ENCODE measurements at regions of chr1 and their contacts with region 1.

Region 1: GRCh38 chr1:40519517-40519916 is 10.9 kb downstream of the EXO5 start:
- DNase-seq: no peak
- H3K4me3 Mint-ChIP-seq: no peak overlapping the region
- H3K27ac Mint-ChIP-seq: no peak overlapping the region
- H3K4me1 Mint-ChIP-seq: no peaks in the 10 kb centered on the region
- H3K27me3 Mint-ChIP-seq: no peaks in the 10 kb centered on the region
- CTCF ChIP-seq: no peak

Region 2: DNA sequence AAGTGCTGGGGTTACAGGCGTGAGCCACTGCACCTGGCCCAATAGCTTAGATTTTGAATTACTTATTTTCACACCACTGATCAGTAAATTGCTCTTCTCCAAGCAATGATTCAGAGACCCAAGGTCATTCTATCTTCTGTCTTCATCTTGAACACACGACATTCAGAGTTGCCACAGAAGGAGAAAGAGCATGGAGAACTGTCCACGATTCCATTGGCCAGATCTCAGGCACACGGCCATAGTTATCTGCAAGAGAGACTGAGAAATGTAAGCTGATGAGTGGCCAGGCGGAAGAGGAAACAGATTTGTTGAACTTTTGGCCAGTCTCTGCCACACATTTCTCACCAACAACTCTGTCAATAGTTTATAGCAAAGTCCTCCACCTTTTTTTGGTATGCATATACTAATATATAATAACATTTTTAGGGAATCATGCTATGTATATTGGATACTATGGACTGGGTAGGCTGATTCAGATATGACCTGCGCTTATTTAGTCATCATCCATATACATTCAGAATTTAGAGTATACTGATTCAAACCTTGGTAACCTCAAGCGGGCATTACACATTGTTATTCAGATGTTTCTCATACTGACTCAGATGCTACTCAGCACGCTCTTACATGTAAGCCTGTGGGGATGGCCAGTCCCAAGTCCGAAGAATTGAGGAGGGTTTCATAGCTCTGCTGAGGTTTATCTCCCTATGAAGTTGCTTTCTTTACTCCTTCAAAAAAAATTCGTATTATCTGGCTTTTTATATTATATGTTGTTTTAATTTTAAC is 504.5 kb before region 1 on chr1:
- CTCF ChIA-PET with region 1: no interaction called
- intact Hi-C with region 1: no loop called
- DNase-seq: no peak
- H3K4me3 Mint-ChIP-seq: no peak overlapping the region
- H3K27ac Mint-ChIP-seq: no peak overlapping the region
- H3K4me1 Mint-ChIP-seq: peaks cover 8% of the 10 kb centered on the region
- H3K27me3 Mint-ChIP-seq: no peaks in the 10 kb centered on the region
- CTCF ChIP-seq: no peak

Region 3: DNA sequence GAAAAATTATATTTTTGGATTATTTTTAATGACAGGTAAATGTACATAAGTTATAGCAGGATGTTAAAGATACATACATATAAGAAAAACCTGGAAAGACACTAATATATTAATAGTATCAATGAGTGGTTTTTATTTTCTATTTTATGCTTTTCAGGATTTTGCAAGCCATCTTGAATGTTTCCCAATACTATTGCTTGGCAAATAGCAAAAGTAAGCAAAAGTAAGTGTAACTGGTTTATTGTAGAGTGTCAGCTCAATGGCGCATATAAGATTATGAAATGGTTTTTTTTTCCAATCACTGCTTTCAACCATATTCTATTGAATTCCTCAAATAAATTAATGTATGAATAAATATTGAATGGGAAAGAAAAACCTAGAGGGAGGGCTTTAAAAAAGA is 48.3 kb after region 1 on chr1:
- CTCF ChIA-PET with region 1: no interaction called
- intact Hi-C with region 1: loop called (anchors 2 kb)
- DNase-seq: no peak
- H3K4me3 Mint-ChIP-seq: no peak overlapping the region
- H3K27ac Mint-ChIP-seq: no peak overlapping the region
- H3K4me1 Mint-ChIP-seq: no peaks in the 10 kb centered on the region
- H3K27me3 Mint-ChIP-seq: peaks cover 15% of the 10 kb centered on the region
- CTCF ChIP-seq: no peak

Measured in Calu3 (cell line).